CD14-positive monocyte (primary cell): ENCODE measurements at regions of chr9 and their contacts with region 1.

Region 1: GRCh38 chr9:93159601-93160471 is 24.1 kb upstream of the WNK2 start:
- DNase-seq: peak; percentile 70 to 82 (median 75)
- H3K4me3 ChIP-seq: no peak overlapping the region
- H3K4me3 Mint-ChIP-seq: no peak overlapping the region
- H3K27ac ChIP-seq: no peak overlapping the region
- H3K27ac Mint-ChIP-seq: peak overlapping the region in 2 of 7 donors; percentile 58 to 65
- H3K4me1 ChIP-seq: peaks cover 6 to 10% of the 10 kb centered on the region in 2 donors
- H3K4me1 Mint-ChIP-seq: peaks cover 10% of the 10 kb centered on the region
- H3K27me3 ChIP-seq: no peaks in the 10 kb centered on the region
- H3K27me3 Mint-ChIP-seq: peaks cover 3 to 13% (median 8%) of the 10 kb centered on the region in 3 donors
- CTCF ChIP-seq: peak; percentile 97

Region 2: DNA sequence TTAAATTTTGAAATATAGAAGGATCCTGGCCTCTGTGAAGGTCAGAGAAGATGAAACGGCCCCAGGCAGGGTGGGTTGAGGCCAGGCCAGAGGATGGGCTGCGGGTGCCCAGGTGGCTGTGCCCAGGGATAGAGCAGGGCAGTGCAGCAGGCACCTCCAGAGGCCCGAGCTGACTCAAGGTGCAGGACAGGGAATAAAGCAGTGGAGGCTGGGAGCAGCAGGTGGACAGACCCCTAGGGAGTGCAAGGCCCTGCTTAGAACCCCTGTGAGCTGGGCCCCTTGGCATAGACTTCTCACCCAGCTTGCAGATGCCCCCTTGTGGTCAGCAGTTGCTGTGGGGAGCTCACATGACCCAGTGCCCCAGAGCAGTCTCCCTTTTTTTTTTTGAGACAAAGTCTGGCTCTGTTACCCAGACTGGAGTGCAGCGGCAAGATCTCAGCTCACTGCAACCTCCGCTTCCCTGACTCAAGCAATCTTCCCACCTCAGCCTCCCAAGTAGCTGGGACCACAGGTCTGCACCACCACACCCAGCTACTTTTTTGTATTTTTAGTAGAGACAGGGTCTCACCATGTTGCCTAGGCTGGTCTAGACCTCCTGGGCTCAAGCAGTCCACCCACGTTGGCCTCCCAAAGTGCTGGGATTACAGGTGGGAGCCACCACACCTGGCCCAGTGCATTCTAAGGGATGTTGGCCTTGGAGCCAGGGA is 142.9 kb after region 1 on chr9:
- intact Hi-C with region 1: loop called (anchors 2 to 5 kb)
- DNase-seq: peak; percentile 54 to 70 (median 58)
- H3K4me3 ChIP-seq: no peak overlapping the region
- H3K4me3 Mint-ChIP-seq: no peak overlapping the region
- H3K27ac ChIP-seq: no peak overlapping the region
- H3K27ac Mint-ChIP-seq: peak overlapping the region in 2 of 7 donors; percentile 52 to 65
- H3K4me1 ChIP-seq: peaks cover 9 to 11% of the 10 kb centered on the region in 2 donors
- H3K4me1 Mint-ChIP-seq: peaks cover 9% of the 10 kb centered on the region
- H3K27me3 ChIP-seq: no peaks in the 10 kb centered on the region
- H3K27me3 Mint-ChIP-seq: peaks cover 3 to 11% (median 8%) of the 10 kb centered on the region in 3 donors
- CTCF ChIP-seq: peak; percentile 77